WTC11 (cell line): ENCODE measurements at regions of chr10 and their contacts with region 1.

Region 1: DNA sequence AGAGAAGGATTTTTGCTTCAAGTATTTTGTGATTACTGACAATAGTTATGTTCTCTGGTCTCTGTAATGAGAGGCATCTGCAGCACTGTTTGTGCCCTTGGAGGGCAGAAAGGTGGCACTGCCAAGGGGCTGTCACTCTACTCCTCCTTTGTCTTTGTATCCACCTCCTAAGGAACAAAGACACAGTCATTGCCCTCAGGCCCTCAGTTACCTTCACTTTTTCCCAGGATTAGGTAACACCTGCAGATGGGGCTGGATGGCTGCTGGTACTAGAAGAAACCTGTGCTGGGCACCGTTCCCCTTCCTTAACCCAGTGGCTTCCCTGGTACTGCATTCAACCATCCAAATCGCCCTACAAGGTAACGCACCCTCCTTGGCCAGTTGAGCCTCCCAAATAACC is 246.9 kb upstream of the NEBL start:
- DNase-seq: no peak
- ATAC-seq: peak; percentile 53
- H3K4me3 Mint-ChIP-seq: no peak overlapping the region
- H3K27ac Mint-ChIP-seq: no peak overlapping the region
- H3K4me1 Mint-ChIP-seq: peaks cover 16% of the 10 kb centered on the region
- H3K27me3 Mint-ChIP-seq: no peaks in the 10 kb centered on the region
- CTCF ChIP-seq: no peak

Region 2: DNA sequence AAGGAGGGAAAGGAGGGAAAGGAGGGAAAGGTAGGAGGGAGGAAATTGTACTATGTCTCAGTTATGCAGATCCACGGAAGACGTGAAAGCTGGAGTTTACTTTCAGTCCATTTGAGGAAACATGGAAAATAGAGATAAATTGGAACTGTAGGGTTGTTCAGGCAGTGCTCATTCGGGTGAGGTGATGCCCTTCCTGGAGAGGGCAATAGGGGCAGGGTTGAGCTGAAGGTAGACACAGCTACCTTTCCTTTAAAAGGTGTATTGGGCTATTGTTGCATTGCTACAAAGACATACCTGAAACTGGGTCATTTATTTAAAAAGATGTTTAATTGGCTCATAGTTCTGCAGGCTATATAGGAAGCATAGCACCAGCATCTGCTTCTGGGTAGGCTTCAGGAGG is 1444.7 kb before region 1 on chr10:
- CTCF ChIA-PET with region 1: no interaction called
- POLR2A ChIA-PET with region 1: interaction called, 11 read pairs
- DNase-seq: no peak
- ATAC-seq: peak; percentile 83
- H3K4me3 Mint-ChIP-seq: no peak overlapping the region
- H3K27ac Mint-ChIP-seq: no peak overlapping the region
- H3K4me1 Mint-ChIP-seq: peaks cover 4% of the 10 kb centered on the region; the same call in 1 of the 2 replicates
- H3K27me3 Mint-ChIP-seq: no peaks in the 10 kb centered on the region
- CTCF ChIP-seq: no peak

Region 3: GRCh38 chr10:20768843-20769242 is 375.2 kb before region 1 on chr10:
- CTCF ChIA-PET with region 1: no interaction called
- POLR2A ChIA-PET with region 1: no interaction called
- DNase-seq: no peak
- ATAC-seq: no peak
- H3K4me3 Mint-ChIP-seq: no peak overlapping the region
- H3K27ac Mint-ChIP-seq: no peak overlapping the region
- H3K4me1 Mint-ChIP-seq: peaks cover 7% of the 10 kb centered on the region
- H3K27me3 Mint-ChIP-seq: no peaks in the 10 kb centered on the region
- CTCF ChIP-seq: no peak

Region 4: GRCh38 chr10:21166557-21167287 is 22.7 kb after region 1 on chr10:
- CTCF ChIA-PET with region 1: no interaction called
- POLR2A ChIA-PET with region 1: no interaction called
- DNase-seq: no peak
- ATAC-seq: no peak
- H3K4me3 Mint-ChIP-seq: no peak overlapping the region
- H3K27ac Mint-ChIP-seq: peak overlapping the region; percentile 54
- H3K4me1 Mint-ChIP-seq: peaks cover 12% of the 10 kb centered on the region
- H3K27me3 Mint-ChIP-seq: peaks cover 4% of the 10 kb centered on the region; the same call in 1 of the 2 replicates
- CTCF ChIP-seq: no peak